Mammary epithelial cell (primary cell): ENCODE measurements at regions of chr20 and their contacts with region 1.

Region 1: GRCh38 chr20:19185090-19185489 is 27.4 kb upstream of the SLC24A3 start:
- DNase-seq: no peak
- H3K4me3 ChIP-seq: no peak overlapping the region
- H3K27ac ChIP-seq: no peak overlapping the region
- H3K4me1 ChIP-seq: no peaks in the 10 kb centered on the region
- H3K27me3 ChIP-seq: no peaks in the 10 kb centered on the region
- CTCF ChIP-seq: no peak

Region 2: GRCh38 chr20:18412221-18412901 is 772.7 kb before region 1 on chr20:
- CTCF ChIA-PET with region 1: no interaction called
- dilution Hi-C with region 1: no loop called
- in situ Hi-C with region 1: no loop called
- intact Hi-C with region 1: loop called (anchors 5 kb)
- DNase-seq: no peak
- H3K4me3 ChIP-seq: no peak overlapping the region
- H3K27ac ChIP-seq: no peak overlapping the region
- H3K4me1 ChIP-seq: peaks cover 19% of the 10 kb centered on the region
- H3K27me3 ChIP-seq: no peaks in the 10 kb centered on the region
- CTCF ChIP-seq: no peak